CD8-positive, alpha-beta T cell (primary cell): ENCODE measurements at regions of chr2 and their contacts with region 1.

Region 1: DNA sequence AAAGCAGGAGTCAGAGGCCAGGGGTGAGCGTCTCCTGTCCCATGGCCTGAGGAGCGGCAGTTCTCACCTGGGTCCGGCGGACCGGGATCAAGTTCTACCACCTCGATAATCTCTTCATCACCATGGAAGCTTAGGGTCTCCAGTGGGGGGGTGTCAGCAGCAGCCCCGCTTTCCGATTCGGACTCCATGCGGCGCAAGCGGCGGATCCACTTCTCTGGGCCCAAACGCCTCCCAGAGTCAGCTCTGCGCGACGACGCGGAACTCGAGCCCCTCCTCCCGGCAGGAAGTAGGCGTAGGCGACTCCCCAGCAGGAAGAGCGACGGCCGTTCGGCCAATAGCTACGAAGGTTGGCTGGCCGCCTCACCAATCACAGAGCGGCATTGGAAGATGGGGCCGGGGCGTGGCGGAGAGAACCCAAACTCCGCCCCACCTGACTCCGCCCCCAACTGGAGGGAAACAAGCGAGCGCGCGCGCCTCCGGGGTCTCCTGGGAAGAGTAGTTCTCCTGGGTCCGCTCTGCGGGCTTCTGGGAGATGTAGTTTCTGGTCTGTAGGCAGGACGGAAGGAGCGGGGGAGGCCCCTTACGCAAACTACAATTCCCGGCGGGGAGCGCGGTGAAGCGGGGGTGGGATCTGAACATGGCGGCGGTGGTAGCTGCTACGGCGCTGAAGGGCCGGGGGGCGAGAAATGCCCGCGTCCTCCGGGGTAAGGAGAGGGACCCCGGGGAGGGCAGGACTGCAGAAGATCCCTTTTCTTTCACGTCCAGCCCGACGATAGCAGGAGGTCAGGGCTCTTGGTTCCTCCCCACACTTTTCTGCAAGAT is at the starts of genes AAMP and PNKD:
- DNase-seq: peak; percentile 100
- ATAC-seq: peak; percentile 89
- H3K4me3 ChIP-seq: peak within 1 kb of the TSS; percentile 82 to 95
- H3K4me3 Mint-ChIP-seq: peak within 1 kb of the TSS; percentile 92
- H3K27ac ChIP-seq: peak within 1 kb of the TSS; percentile 81 to 82
- H3K27ac Mint-ChIP-seq: peak within 1 kb of the TSS; percentile 92
- H3K4me1 ChIP-seq: peaks cover 31% of the 10 kb centered on the region
- H3K4me1 Mint-ChIP-seq: peaks cover 50% of the 10 kb centered on the region
- H3K27me3 ChIP-seq: no peaks in the 10 kb centered on the region
- H3K27me3 Mint-ChIP-seq: no peaks in the 10 kb centered on the region
- CTCF ChIP-seq: no peak
- total RNA-seq, gene AAMP: 44.7 to 50.4 TPM
- total RNA-seq, gene PNKD: 7.1 to 7.2 TPM

Region 2: DNA sequence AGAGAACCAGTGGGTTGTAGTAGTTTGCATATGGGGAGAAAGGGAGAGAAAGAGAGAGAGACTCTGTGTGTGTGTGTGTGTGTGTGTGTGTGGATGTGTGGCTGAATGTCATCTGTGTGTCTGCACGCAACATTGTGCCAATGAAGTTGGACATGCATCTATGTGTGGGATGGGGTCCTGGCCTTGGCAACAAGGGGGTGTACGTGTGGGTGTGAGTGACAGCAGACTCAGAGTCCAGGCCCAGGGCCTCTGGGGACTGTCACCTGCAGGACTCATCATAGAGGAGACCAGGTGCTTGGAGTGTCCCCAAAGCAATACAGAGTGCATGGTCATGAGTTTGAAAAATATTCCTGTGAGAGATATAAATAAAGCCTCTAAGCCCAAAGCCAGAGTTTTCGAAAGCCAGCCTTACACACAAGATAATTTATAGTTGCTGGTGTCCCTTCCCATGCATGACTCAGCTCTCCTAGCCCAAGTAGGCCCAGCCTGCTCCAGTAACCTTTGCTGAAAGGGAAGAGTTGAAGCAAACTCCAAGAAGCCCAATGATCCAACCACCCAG is 1470.2 kb before region 1 on chr2:
- CTCF ChIA-PET with region 1: no interaction called
- POLR2A ChIA-PET with region 1: no interaction called
- intact Hi-C with region 1: no loop called
- DNase-seq: no peak
- ATAC-seq: no peak
- H3K4me3 ChIP-seq: no peak overlapping the region
- H3K4me3 Mint-ChIP-seq: no peak overlapping the region
- H3K27ac ChIP-seq: no peak overlapping the region
- H3K27ac Mint-ChIP-seq: no peak overlapping the region
- H3K4me1 ChIP-seq: no peaks in the 10 kb centered on the region
- H3K4me1 Mint-ChIP-seq: no peaks in the 10 kb centered on the region
- H3K27me3 ChIP-seq: no peaks in the 10 kb centered on the region
- H3K27me3 Mint-ChIP-seq: no peaks in the 10 kb centered on the region
- CTCF ChIP-seq: no peak

Region 3: GRCh38 chr2:217918308-217919024 is 351.6 kb before region 1 on chr2:
- CTCF ChIA-PET with region 1: no interaction called
- POLR2A ChIA-PET with region 1: no interaction called
- intact Hi-C with region 1: no loop called
- DNase-seq: no peak
- ATAC-seq: no peak
- H3K4me3 ChIP-seq: no peak overlapping the region
- H3K4me3 Mint-ChIP-seq: no peak overlapping the region
- H3K27ac ChIP-seq: no peak overlapping the region
- H3K27ac Mint-ChIP-seq: no peak overlapping the region
- H3K4me1 ChIP-seq: no peaks in the 10 kb centered on the region
- H3K4me1 Mint-ChIP-seq: no peaks in the 10 kb centered on the region
- H3K27me3 ChIP-seq: no peaks in the 10 kb centered on the region
- H3K27me3 Mint-ChIP-seq: peaks cover 5% of the 10 kb centered on the region
- CTCF ChIP-seq: no peak

Region 4: GRCh38 chr2:218229239-218229638 is 40.9 kb before region 1 on chr2:
- CTCF ChIA-PET with region 1: interaction called, 10 read pairs
- POLR2A ChIA-PET with region 1: interaction called, 4 read pairs
- intact Hi-C with region 1: loop called in 1 of 2 experiments (anchors 5 kb)
- DNase-seq: peak in 7 of 9 experiments; percentile 36 to 81 (median 49)
- ATAC-seq: peak; percentile 79
- H3K4me3 ChIP-seq: no peak overlapping the region
- H3K4me3 Mint-ChIP-seq: peak overlapping the region; percentile 44
- H3K27ac ChIP-seq: peak overlapping the region in 1 of 2 experiments; percentile 63
- H3K27ac Mint-ChIP-seq: peak overlapping the region; percentile 89
- H3K4me1 ChIP-seq: peaks cover 66% of the 10 kb centered on the region
- H3K4me1 Mint-ChIP-seq: peaks cover 78% of the 10 kb centered on the region
- H3K27me3 ChIP-seq: no peaks in the 10 kb centered on the region
- H3K27me3 Mint-ChIP-seq: no peaks in the 10 kb centered on the region
- CTCF ChIP-seq: no peak

Region 5: DNA sequence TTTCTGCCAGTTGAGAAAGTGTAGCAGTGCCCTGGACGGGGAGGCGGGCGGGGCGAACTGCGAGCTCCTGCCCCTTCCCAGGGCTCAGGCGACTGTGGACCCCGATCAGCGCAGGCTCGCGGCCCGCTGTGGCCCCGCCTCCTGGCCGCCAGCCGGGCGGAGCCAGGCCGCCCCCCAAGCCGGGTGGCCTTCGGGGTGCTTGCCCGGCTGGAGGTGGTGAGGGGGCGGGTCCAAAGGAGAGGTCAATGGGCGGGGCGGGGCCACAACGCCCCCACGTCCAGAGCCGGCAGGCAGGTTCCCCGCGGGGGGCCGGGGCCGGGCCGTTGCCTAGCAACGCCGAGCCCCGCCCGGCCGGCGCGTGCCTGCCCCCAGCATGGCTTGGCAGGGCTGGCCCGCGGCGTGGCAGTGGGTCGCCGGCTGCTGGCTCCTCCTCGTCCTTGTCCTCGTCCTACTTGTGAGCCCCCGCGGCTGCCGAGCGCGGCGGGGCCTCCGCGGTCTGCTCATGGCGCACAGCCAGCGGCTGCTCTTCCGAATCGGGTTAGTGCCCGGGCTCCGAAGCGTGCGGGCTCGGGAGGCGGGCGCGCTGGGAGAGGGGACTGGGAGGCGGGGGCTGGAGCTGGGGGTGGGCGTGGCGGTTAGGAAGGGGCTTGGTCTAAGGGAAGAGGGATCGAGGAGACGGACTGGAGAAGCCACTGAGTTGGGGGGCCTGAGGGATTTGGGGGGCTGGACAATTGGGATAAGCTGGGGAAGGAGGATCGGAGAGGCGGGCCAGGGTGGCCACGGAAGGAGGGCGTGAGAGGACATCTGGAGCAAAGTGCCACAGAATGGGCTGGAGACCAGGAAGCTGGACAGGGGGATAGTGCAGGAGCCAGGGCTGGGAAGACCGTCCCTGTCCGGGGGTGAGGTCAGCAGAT is 53.0 kb after region 1 on chr2:
- CTCF ChIA-PET with region 1: interaction called, 3 read pairs
- POLR2A ChIA-PET with region 1: no interaction called
- intact Hi-C with region 1: loop called in 1 of 2 experiments (anchors 1 kb)
- DNase-seq: peak; percentile 9 to 71 (median 45)
- ATAC-seq: peak; percentile 70
- H3K4me3 ChIP-seq: peak overlapping the region; percentile 39 to 48
- H3K4me3 Mint-ChIP-seq: peak overlapping the region; percentile 86
- H3K27ac ChIP-seq: peak overlapping the region in 1 of 2 experiments; percentile 48
- H3K27ac Mint-ChIP-seq: peak overlapping the region; percentile 77
- H3K4me1 ChIP-seq: peaks cover 47% of the 10 kb centered on the region
- H3K4me1 Mint-ChIP-seq: peaks cover 56% of the 10 kb centered on the region
- H3K27me3 ChIP-seq: peaks cover 0 to 3% of the 10 kb centered on the region in 2 experiments
- H3K27me3 Mint-ChIP-seq: peaks cover 4% of the 10 kb centered on the region
- CTCF ChIP-seq: no peak

Region 6: DNA sequence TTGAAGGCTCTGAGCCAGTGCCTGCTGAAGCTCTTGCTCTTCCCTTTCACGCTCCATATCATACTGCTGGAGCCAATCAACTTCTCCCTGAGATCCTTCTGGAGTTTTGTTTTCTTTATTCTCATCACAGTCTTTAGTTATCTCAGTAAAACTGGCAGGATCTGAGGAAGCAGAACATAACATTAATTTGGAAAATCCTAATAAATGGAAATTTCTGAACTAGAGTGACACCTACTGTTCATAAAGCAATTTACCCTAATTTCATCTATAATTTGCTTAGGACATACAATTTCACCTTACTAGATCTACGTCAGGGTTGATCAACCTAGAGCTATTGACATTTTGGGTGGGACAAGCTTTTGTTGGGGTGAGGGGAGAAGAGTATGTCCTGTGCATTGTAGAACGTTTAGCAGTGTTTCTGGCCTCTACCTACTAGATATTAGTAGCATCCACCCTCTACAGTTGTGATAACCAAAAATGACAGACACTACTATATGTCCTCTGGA is 196.0 kb after region 1 on chr2:
- CTCF ChIA-PET with region 1: interaction called, 12 read pairs
- POLR2A ChIA-PET with region 1: no interaction called
- intact Hi-C with region 1: loop called (anchors 1 kb)
- DNase-seq: peak in 2 of 9 experiments; percentile 21 to 46
- ATAC-seq: peak; percentile 26
- H3K4me3 ChIP-seq: no peak overlapping the region
- H3K4me3 Mint-ChIP-seq: no peak overlapping the region
- H3K27ac ChIP-seq: no peak overlapping the region
- H3K27ac Mint-ChIP-seq: no peak overlapping the region
- H3K4me1 ChIP-seq: no peaks in the 10 kb centered on the region
- H3K4me1 Mint-ChIP-seq: peaks cover 11% of the 10 kb centered on the region
- H3K27me3 ChIP-seq: no peaks in the 10 kb centered on the region
- H3K27me3 Mint-ChIP-seq: no peaks in the 10 kb centered on the region
- CTCF ChIP-seq: peak; percentile 52

Region 7: GRCh38 chr2:218852911-218853667 is 583.0 kb after region 1 on chr2:
- CTCF ChIA-PET with region 1: no interaction called
- POLR2A ChIA-PET with region 1: no interaction called
- intact Hi-C with region 1: loop called (anchors 5 kb)
- DNase-seq: peak; percentile 36 to 80 (median 70)
- ATAC-seq: peak; percentile 90
- H3K4me3 ChIP-seq: no peak overlapping the region
- H3K4me3 Mint-ChIP-seq: no peak overlapping the region
- H3K27ac ChIP-seq: no peak overlapping the region
- H3K27ac Mint-ChIP-seq: no peak overlapping the region
- H3K4me1 ChIP-seq: no peaks in the 10 kb centered on the region
- H3K4me1 Mint-ChIP-seq: peaks cover 3% of the 10 kb centered on the region
- H3K27me3 ChIP-seq: peaks cover 15 to 22% of the 10 kb centered on the region in 2 experiments
- H3K27me3 Mint-ChIP-seq: peaks cover 66% of the 10 kb centered on the region
- CTCF ChIP-seq: peak; percentile 80